ENCODE measurements at regions of chr4 and their contacts with region 1.

Region 1: DNA sequence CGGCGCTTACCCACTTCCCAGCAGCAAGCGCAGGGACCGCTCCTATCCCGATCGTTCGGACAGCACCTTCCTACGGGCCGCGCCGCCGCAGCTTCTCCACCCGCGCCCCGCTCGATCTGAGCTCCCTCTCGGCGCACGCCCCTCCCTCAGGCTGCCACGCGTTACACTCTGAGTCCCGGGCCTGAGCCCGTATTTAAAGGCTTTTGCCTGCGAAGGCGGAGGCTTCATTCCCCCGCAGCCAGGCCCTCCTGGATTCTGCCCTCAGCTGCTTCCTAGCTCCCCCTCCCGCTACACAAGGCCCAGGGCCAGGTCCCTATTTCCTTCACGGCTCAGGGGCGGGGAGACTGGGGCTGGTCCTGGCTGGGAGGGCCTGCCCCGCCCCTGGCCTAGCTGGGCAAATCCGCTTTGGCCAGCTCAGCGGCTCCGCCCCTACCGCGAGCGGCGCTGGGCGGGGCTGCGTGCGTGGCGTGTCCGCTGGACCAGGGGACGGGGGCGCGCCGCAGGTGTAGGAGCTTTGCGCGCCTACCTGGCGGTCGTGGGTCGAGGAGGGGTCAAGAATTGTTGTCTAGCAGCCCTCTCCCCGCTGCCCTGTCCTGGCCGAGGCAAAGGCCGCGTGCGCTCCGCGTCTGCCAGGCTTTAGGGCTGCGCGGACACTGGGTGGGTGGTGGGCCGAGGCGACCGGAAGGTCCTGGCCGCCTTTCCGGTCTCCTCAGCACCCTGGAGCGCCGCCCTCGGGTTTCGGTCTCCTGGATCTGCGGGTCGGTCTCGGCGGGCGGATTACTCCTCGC is at the start of gene UGDH:
- DNase-seq: peak; percentile 89 to 99 (median 96)
- H3K4me3 ChIP-seq: peak within 1 kb of the TSS; percentile 59 to 99 (median 94)
- H3K27ac ChIP-seq: peak within 1 kb of the TSS; percentile 70 to 99 (median 95)
- H3K27me3 ChIP-seq: no peaks in the 10 kb centered on the region
- CTCF ChIP-seq: peak in 35 of 56 donors; percentile 3 to 56 (median 31)
- total RNA-seq, gene UGDH: 8.7 to 26.5 (median 15.0) TPM

Region 2: DNA sequence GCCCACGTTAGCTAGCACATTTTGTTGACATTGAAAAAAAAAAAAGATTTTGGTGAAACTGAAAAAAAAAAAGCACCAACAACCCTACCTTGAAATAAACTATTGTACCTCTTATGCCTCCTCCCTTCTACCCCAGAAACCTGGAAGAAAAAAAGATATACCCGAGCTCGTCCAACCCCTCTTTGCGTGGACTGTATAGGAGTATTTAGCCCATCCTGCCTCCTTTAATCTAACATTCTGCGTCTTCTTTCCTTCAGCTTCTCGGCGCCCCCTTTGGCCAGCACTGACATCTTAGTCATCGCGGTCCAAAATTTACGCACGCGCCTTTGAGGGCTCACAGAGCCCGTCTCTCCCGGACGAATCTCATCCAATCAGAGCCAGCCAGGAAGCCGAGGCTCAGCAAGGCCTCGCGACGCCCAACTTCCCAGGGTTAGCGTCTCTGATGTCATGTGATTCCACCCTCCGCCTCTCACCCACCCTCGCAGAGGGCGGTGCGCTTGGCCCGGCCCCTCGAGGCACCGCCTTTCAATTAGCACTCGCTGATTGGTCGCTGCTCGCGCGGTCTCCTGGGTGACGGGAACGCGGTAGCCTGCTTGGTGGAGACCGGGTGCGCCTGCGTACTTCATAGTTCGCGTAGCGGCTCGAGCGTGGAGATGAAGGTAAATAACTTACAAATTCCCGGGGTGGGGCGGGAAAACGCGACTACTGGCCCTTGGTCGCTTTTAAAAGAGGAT is 345.4 kb before region 1 on chr4 and contains the start of gene WDR19:
- intact Hi-C with region 1: loop called in 1 of 2 experiments (anchors 5 kb)
- DNase-seq: peak; percentile 98 to 100 (median 99)
- H3K4me3 ChIP-seq: peak within 1 kb of the TSS; percentile 55 to 93 (median 82)
- H3K27ac ChIP-seq: peak within 1 kb of the TSS; percentile 40 to 92 (median 83)
- H3K27me3 ChIP-seq: no peaks in the 10 kb centered on the region
- CTCF ChIP-seq: peak in 55 of 56 donors; percentile 20 to 78 (median 59)
- total RNA-seq, gene WDR19: 39.7 to 107 (median 68.1) TPM

Region 3: DNA sequence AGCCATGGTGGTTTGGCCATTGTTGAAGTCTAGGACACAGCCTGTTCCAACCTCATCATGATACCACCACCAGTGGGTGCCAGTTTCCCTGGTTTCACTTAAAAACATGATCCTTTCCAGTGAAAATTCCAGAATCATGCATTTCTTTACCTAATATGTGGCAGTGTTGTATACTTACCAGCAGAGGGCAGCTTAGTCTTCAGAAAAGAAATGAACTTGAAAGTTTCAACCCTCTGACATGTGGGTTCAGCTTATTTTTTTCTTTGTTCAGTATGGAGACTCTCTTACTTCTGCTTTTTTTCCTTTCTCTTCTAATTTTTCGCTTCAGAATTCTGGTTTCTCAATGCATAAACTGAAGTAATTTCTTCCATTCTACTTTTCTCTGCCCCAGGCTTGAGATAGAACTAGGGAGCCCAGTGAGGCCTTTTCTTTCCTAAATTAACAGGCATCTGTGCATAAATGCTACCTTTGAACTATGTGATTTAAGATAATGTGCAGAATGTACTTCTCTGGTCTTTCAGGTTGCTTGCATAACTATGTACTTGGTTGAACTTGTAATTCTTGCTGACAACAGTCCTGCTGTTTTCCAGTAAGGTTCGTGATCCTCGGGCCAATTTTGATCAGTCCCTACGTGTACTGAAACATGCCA is 57.9 kb before region 1 on chr4:
- intact Hi-C with region 1: loop called in 1 of 2 experiments (anchors 10 kb)
- DNase-seq: peak in 4 of 10 donors; percentile 15 to 40 (median 24)
- H3K4me3 ChIP-seq: peak overlapping the region in 10 of 59 donors; percentile 1 to 28 (median 6)
- H3K27ac ChIP-seq: peak overlapping the region; percentile 17 to 99 (median 84)
- H3K27me3 ChIP-seq: no peaks in the 10 kb centered on the region
- CTCF ChIP-seq: peak; percentile 81 to 97 (median 92)

Region 4: GRCh38 chr4:39697740-39698423 is 170.4 kb after region 1 on chr4 and contains the start of gene UBE2K:
- intact Hi-C with region 1: loop called (anchors 1 to 5 kb)
- DNase-seq: peak; percentile 57 to 92 (median 78)
- H3K4me3 ChIP-seq: peak within 1 kb of the TSS; percentile 66 to 98 (median 89)
- H3K27ac ChIP-seq: peak within 1 kb of the TSS; percentile 78 to 99 (median 94)
- H3K27me3 ChIP-seq: no peaks in the 10 kb centered on the region
- CTCF ChIP-seq: peak in 43 of 56 donors; percentile 10 to 68 (median 43)
- total RNA-seq, gene UBE2K: 44.7 to 140 (median 90.1) TPM

Region 5: GRCh38 chr4:40056716-40057585 is 529.5 kb after region 1 on chr4 and contains the start of gene N4BP2:
- intact Hi-C with region 1: loop called in 1 of 2 experiments (anchors 5 kb)
- DNase-seq: peak; percentile 34 to 79 (median 60)
- H3K4me3 ChIP-seq: peak within 1 kb of the TSS; percentile 58 to 94 (median 84)
- H3K27ac ChIP-seq: peak within 1 kb of the TSS; percentile 55 to 100 (median 97)
- H3K27me3 ChIP-seq: no peaks in the 10 kb centered on the region
- CTCF ChIP-seq: peak; percentile 29 to 95 (median 75)
- total RNA-seq, gene N4BP2: 3.7 to 18.5 (median 9.2) TPM